Head of caudate nucleus (tissue), 42 donors: ENCODE measurements at regions of chr2 and their contacts with region 1.

Region 1: DNA sequence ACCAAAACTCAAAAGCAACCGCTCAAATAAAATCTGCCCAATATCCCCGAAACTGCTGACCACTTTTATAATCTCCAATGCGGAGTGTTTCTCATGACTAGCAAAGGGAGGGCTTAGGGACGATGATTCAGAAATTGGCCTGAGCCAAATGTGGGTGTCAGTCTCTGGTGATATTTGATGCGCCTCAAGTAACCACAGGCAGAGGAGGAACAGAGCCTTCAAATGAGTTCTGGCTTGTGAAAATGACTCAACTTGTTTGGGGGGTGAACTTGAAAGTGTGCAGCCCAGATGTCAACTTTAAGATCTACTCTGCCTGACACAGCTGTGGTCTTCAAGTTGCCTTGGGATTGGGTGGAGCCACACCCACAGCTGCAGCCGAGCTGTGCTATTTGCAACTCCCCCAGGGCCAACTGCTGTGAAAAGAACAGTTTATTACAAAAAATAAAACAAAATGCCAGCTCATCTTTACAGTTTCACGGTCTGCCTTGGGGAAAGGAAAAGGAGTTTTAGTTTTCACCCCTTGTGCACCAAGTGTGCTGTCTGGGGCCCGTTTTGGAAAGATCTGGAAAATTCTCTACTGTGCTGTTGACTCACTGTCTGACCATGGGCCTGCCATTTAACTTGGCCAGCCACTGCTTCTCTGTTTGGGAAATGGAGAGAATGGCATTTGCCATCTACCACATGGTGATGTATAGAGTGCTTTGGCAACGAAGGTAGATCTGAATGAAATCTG is 222.1 kb downstream of the MTX2 start:
- DNase-seq: peak in 1 of 42 donors; percentile 17

Region 2: GRCh38 chr2:176106581-176107539 is 384.5 kb before region 1 on chr2 and contains the start of gene HOXD11:
- intact Hi-C with region 1: no loop called
- DNase-seq: peak in 1 of 42 donors; percentile 32

Region 3: GRCh38 chr2:178359192-178359912 is 1868.0 kb after region 1 on chr2:
- intact Hi-C with region 1: loop called (anchors 10 kb)
- DNase-seq: no peak